Breast epithelium (tissue), 4 donors: ENCODE measurements at regions of chr9 and their contacts with region 1.

Region 1: GRCh38 chr9:6302436-6302835 is 25.7 kb upstream of the TPD52L3 start:
- DNase-seq: no peak
- H3K4me3 ChIP-seq: no peak overlapping the region
- H3K27ac ChIP-seq: no peak overlapping the region
- H3K4me1 ChIP-seq: no peaks in the 10 kb centered on the region
- H3K27me3 ChIP-seq: no peaks in the 10 kb centered on the region
- CTCF ChIP-seq: no peak
- POLR2A ChIP-seq: no peak

Region 2: DNA sequence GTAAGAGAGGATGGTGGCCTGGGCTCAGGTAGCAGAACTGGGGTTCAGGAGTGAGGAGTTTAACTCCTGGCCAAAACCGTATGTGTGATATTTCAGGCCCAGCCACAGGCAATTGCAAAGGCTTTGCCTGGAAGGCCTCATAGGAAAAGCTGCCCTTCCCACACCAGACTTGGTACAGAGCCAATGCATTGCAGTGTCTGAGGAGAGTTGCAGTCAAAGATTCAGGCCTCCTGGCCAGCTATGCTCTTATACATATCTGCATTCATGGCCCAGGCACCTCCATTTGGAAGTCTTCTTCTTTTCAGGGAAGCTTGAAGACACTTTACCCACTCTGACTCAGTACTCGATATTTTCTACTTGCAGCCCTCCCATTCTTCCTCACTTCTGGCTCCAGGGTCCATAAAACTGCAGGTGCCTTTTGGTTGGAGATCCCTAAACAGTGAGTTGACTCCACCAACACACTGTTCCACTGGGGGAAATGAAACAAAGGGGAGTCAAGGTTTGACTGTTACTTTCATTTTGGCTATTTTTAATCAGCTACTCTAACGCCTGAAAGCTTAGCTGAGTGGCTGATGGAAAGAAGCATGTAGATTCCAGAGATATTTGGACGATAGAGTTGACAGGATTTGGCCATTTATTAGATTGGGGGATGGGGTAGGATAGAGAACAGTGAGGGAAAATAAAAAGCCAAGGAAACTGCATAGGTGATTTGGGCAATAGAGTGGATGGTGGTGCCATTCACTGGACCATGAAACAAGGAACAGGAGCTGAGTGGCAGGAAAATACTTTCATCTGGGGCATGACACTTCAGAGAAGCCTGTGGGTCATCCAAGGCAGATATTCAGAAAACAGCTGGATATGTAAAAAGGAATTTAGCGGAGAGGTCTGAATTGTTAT is 117.4 kb before region 1 on chr9:
- intact Hi-C with region 1: loop called (anchors 5 kb)
- DNase-seq: no peak
- H3K4me3 ChIP-seq: no peak overlapping the region
- H3K27ac ChIP-seq: no peak overlapping the region
- H3K4me1 ChIP-seq: no peaks in the 10 kb centered on the region
- H3K27me3 ChIP-seq: no peaks in the 10 kb centered on the region
- CTCF ChIP-seq: no peak
- POLR2A ChIP-seq: no peak